AG04450 (cell line): ENCODE measurements at regions of chr11 and their contacts with region 1.

Region 1: GRCh38 chr11:69686452-69686851 is 11.3 kb upstream of the LTO1 start:
- DNase-seq: no peak
- H3K4me3 ChIP-seq: no peak overlapping the region
- H3K27ac ChIP-seq: no peak overlapping the region
- H3K27me3 ChIP-seq: peaks cover 5% of the 10 kb centered on the region
- CTCF ChIP-seq: no peak

Region 2: DNA sequence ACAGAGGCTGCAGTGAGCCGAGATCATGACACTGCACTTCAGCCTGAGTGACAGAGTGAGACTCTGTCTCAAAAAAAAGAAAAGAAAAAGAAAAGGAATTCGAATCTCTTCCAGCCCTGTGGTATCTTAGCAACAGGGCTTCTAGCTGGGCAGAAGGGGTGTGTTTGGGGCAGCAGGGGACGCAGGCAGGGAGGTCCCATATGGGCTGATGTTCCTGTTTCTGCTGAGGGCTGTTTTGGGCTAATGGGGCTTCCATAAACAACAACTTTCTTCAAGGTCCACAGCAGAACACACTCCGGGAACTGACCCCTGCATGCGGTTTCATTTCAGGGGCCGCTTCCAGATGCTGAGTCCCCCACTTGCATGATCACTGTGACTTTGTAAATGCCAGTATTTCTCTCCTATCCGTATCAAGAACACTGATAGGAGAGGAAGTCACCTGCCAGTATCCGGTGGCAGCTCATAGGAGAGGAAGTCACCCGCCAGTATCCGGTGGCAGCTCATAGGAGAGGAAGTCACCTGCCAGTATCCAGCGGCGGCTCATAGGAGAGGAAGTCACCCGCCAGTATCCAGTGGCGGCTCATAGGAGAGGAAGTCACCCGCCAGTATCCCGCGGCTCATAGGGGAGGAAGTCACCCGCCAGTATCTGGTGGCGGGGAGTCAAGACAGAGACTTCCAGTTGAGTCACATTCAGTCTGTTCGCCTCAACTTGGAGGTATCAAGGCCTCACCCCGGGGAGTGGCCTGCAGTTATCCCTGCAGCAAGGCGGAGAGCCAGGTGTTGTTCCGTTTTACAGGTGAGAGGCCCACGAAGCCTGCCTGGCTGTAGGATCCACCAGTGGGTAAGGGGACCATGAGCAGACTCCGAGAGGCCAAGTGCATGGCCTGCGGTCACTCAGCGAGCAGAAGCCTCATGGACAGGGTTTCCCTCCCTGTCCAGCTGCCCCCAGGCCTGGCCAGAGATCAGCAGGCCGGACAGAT is 25.7 kb after region 1 on chr11:
- CTCF ChIA-PET with region 1: no interaction called
- POLR2A ChIA-PET with region 1: no interaction called
- DNase-seq: no peak
- H3K4me3 ChIP-seq: no peak overlapping the region
- H3K27ac ChIP-seq: no peak overlapping the region
- H3K27me3 ChIP-seq: peaks cover 23% of the 10 kb centered on the region
- CTCF ChIP-seq: no peak

Region 3: DNA sequence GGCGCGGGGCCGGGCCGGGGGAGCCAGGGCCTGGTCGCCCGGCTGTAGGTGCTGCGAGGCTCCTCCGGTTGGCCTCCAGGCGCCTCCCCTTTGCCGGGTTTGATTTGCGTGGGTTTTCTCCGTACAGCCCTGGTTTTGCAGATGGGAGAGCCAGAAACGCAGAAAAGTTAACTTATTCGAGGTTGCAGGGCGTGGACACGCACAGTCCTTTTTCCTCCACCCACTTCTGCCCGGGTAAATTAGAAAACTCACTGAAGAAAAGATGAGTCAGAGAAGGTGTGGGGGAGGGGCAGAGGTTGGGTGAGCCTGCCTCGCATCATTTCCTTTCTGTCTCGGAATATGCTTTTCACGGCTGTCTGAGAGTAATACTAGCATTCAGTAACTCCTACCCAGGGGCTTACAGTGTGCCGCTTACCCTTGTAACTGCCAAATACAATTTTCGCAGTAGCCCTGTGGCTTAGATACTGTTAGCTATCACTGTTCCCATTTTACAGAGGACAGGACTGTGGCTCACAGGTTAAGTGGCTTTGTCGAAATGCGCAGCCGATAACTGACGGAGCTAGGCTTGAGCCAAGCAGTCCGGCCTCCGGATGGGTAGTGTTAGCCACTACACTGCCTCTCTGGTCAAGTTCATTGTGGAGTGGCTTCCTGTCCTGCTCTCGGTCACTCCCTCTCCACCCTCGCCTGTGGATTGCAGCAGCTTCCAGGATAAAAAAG is 517.5 kb after region 1 on chr11:
- CTCF ChIA-PET with region 1: interaction called, 10 read pairs
- POLR2A ChIA-PET with region 1: no interaction called
- DNase-seq: peak; percentile 46
- H3K4me3 ChIP-seq: peak overlapping the region; percentile 95
- H3K27ac ChIP-seq: peak overlapping the region; percentile 91
- H3K27me3 ChIP-seq: no peaks in the 10 kb centered on the region
- CTCF ChIP-seq: no peak